SK-N-SH (cell line): ENCODE measurements at regions of chr1 and their contacts with region 1.

Region 1: DNA sequence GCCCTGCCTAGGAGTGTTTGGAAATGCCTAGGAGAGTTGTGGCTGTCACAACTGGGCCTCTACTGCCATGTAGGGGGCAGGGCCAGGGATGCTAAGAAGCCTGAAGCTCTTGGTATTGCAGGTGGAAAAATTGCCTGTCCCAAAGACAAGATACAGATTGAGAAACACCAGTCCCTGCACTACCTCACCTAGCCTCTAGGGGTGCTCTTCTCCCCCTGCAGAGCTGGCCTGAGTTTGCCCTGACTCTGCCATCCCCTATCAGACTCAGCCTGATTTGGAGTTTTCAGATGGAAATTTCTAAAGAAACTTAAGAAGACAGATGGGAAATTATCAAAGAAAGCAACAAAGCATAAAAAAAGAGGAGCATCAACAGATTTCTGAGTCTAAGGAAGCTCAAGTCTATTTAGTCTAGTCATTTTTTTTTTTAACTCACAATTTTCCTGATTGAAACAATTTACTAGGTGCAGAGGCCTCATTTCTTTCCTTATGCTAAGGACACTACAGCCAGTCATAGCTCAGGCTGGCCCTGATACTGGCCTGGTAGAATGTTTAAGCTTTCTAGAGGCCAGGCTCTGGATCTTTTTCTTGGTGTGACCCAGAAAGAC is 61.4 kb upstream of the LRRN2 start:
- DNase-seq: peak; percentile 52
- H3K4me3 ChIP-seq: peak overlapping the region in 1 of 2 experiments; percentile 14; a peak in 1 of 4 replicates
- H3K27ac ChIP-seq: no peak overlapping the region
- H3K4me1 ChIP-seq: peaks cover 0 to 21% of the 10 kb centered on the region in 2 experiments; a peak in 2 of 4 replicates
- H3K27me3 ChIP-seq: peaks cover 22% of the 10 kb centered on the region; the same call in 1 of the 2 replicates
- CTCF ChIP-seq: peak; percentile 86
- EP300 ChIP-seq: no peak
- RAD21 ChIP-seq: peak; percentile 53

Region 2: DNA sequence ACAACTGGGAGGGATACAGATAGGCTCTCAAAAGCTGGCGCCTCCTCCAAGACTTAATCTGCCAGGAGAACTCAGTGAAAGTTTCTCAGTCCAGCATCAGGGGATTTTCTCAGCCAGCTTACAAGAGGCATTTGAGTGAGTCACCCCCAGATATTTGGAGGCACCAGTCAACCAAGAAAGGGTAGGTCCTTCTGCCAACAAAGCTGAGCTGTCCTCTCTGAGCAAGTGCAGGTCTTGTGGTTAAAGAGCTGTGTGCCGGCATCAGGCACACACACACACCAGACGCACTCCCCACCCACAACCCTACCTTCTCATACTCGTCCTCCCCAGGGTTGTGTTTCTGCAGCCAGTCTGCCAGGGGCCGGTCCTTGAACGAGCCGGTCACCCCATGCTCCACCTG is 308.3 kb before region 1 on chr1:
- CTCF ChIA-PET with region 1: no interaction called
- POLR2A ChIA-PET with region 1: no interaction called
- DNase-seq: no peak
- H3K4me3 ChIP-seq: no peak overlapping the region
- H3K27ac ChIP-seq: peak overlapping the region; percentile 87 to 96
- H3K4me1 ChIP-seq: peaks cover 15 to 22% of the 10 kb centered on the region in 2 experiments
- H3K27me3 ChIP-seq: no peaks in the 10 kb centered on the region
- CTCF ChIP-seq: no peak
- EP300 ChIP-seq: peak in 1 of 2 experiments; percentile 93; a peak in 2 of 4 replicates
- RAD21 ChIP-seq: no peak

Region 3: GRCh38 chr1:204572931-204573891 is 173.7 kb before region 1 on chr1:
- CTCF ChIA-PET with region 1: interaction called, 36 read pairs
- POLR2A ChIA-PET with region 1: no interaction called
- DNase-seq: no peak
- H3K4me3 ChIP-seq: no peak overlapping the region
- H3K27ac ChIP-seq: no peak overlapping the region
- H3K4me1 ChIP-seq: peaks cover 6 to 32% of the 10 kb centered on the region in 2 experiments; a peak in 3 of 4 replicates
- H3K27me3 ChIP-seq: no peaks in the 10 kb centered on the region
- CTCF ChIP-seq: no peak
- EP300 ChIP-seq: no peak
- RAD21 ChIP-seq: no peak

Region 4: GRCh38 chr1:204623894-204624361 is 123.0 kb before region 1 on chr1:
- CTCF ChIA-PET with region 1: interaction called, 12 read pairs
- POLR2A ChIA-PET with region 1: no interaction called
- DNase-seq: peak; percentile 72
- H3K4me3 ChIP-seq: no peak overlapping the region
- H3K27ac ChIP-seq: no peak overlapping the region
- H3K4me1 ChIP-seq: peaks cover 0 to 16% of the 10 kb centered on the region in 2 experiments; a peak in 1 of 4 replicates
- H3K27me3 ChIP-seq: no peaks in the 10 kb centered on the region
- CTCF ChIP-seq: no peak; the same call in 1 of the 2 replicates
- EP300 ChIP-seq: no peak
- RAD21 ChIP-seq: peak; percentile 26

Region 5: DNA sequence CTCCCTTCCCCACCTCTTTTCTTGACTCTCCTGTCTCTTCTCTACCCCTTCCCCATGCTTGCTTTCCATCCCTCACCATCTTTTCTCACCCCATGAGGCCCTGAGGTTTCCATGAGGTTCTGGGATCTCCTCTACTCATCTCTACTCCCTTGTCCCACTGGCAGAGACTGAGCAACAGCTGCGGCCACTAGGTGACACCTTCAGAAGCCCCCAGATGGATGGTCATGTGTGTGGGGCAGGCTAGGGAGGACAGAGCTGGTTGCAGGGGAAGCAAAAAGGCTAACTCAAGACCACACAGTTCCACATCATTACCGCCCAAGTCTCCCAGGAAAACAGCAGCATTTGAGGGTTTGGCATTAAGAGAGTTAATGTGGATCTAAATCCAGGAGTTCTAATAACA is 106.4 kb before region 1 on chr1:
- CTCF ChIA-PET with region 1: interaction called, 11 read pairs
- POLR2A ChIA-PET with region 1: interaction called, 3 read pairs
- DNase-seq: no peak
- H3K4me3 ChIP-seq: no peak overlapping the region
- H3K27ac ChIP-seq: no peak overlapping the region
- H3K4me1 ChIP-seq: peaks cover 0 to 20% of the 10 kb centered on the region in 2 experiments; a peak in 2 of 4 replicates
- H3K27me3 ChIP-seq: no peaks in the 10 kb centered on the region; the same call in 1 of the 2 replicates
- CTCF ChIP-seq: no peak
- EP300 ChIP-seq: no peak
- RAD21 ChIP-seq: no peak

Region 6: DNA sequence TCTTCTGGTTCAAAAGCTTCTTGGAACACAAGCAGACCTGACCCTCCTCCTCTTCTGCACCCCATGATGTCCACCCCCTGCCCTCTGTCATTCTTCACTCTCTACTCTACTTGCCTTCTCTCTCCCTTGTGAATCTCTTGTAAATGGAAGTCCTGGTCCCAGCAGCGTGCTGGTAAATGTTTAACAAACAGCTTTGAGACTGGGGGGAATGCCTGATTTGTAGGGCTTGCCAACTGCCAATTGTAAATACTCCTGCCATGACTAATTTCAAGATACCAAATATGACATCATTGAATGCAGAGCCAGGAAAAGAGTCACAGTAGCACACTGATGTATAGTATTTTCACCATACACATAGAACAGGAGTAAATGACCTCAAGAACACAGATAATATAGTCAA is 20.5 kb before region 1 on chr1:
- CTCF ChIA-PET with region 1: interaction called, 17 read pairs
- POLR2A ChIA-PET with region 1: no interaction called
- DNase-seq: no peak
- H3K4me3 ChIP-seq: no peak overlapping the region
- H3K27ac ChIP-seq: no peak overlapping the region
- H3K4me1 ChIP-seq: no peaks in the 10 kb centered on the region
- H3K27me3 ChIP-seq: no peaks in the 10 kb centered on the region; the same call in 1 of the 2 replicates
- CTCF ChIP-seq: no peak
- EP300 ChIP-seq: no peak
- RAD21 ChIP-seq: no peak

Region 7: DNA sequence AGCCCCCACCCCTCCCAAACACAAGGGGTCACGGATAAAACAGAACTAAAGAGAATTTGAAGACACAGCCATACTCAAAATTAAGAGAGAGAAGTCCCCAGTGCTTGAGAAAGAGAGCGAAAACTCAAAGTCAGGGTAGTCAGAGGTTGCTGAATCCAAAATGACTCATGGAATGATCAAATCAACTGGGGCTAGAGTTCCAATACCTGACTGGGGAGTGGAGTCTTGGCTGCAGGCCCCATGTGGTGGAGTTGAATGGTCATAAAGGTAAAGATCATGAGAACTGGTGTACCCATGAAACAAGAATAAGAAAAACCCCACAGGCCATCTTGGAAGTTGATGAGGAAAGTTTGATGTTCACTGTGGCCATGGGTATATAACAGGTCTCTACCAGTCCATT is 23.1 kb after region 1 on chr1:
- CTCF ChIA-PET with region 1: interaction called, 21 read pairs
- POLR2A ChIA-PET with region 1: no interaction called
- DNase-seq: no peak
- H3K4me3 ChIP-seq: no peak overlapping the region
- H3K27ac ChIP-seq: no peak overlapping the region
- H3K4me1 ChIP-seq: no peaks in the 10 kb centered on the region
- H3K27me3 ChIP-seq: peaks cover 23% of the 10 kb centered on the region; the same call in 1 of the 2 replicates
- CTCF ChIP-seq: no peak
- EP300 ChIP-seq: no peak
- RAD21 ChIP-seq: no peak